CD4-positive, alpha-beta memory T cell (primary cell): ENCODE measurements at regions of chr3 and their contacts with region 1.

Region 1: GRCh38 chr3:46070595-46071093 is 43.4 kb upstream of the XCR1 start:
- DNase-seq: peak in 4 of 5 donors; percentile 47 to 56 (median 49)
- H3K4me3 ChIP-seq: no peak overlapping the region
- H3K4me3 Mint-ChIP-seq: peak overlapping the region in 6 of 8 donors; percentile 19 to 65 (median 51)
- H3K27ac ChIP-seq: peak overlapping the region; percentile 13
- H3K27ac Mint-ChIP-seq: peak overlapping the region; percentile 15 to 91 (median 73)
- H3K4me1 ChIP-seq: peaks cover 62% of the 10 kb centered on the region
- H3K4me1 Mint-ChIP-seq: peaks cover 52 to 68% (median 58%) of the 10 kb centered on the region in 4 donors
- H3K27me3 ChIP-seq: no peaks in the 10 kb centered on the region
- H3K27me3 Mint-ChIP-seq: no peaks in the 10 kb centered on the region

Region 2: GRCh38 chr3:45367453-45367871 is 703.2 kb before region 1 on chr3:
- CTCF ChIA-PET with region 1: no interaction called
- POLR2A ChIA-PET with region 1: no interaction called
- intact Hi-C with region 1: no loop called
- DNase-seq: no peak
- H3K4me3 ChIP-seq: no peak overlapping the region
- H3K4me3 Mint-ChIP-seq: no peak overlapping the region
- H3K27ac ChIP-seq: no peak overlapping the region
- H3K27ac Mint-ChIP-seq: no peak overlapping the region
- H3K4me1 ChIP-seq: no peaks in the 10 kb centered on the region
- H3K4me1 Mint-ChIP-seq: no peaks in the 10 kb centered on the region
- H3K27me3 ChIP-seq: no peaks in the 10 kb centered on the region
- H3K27me3 Mint-ChIP-seq: peaks cover 5 to 12% of the 10 kb centered on the region in 2 donors

Region 3: GRCh38 chr3:45964139-45964538 is 106.5 kb before region 1 on chr3:
- CTCF ChIA-PET with region 1: interaction called, 153 read pairs
- POLR2A ChIA-PET with region 1: interaction called, 58 read pairs
- intact Hi-C with region 1: no loop called
- DNase-seq: peak in 1 of 5 donors; percentile 60
- H3K4me3 ChIP-seq: no peak overlapping the region
- H3K4me3 Mint-ChIP-seq: peak overlapping the region in 6 of 8 donors; percentile 11 to 73 (median 38)
- H3K27ac ChIP-seq: peak overlapping the region; percentile 26
- H3K27ac Mint-ChIP-seq: peak overlapping the region; percentile 41 to 88 (median 75)
- H3K4me1 ChIP-seq: peaks cover 64% of the 10 kb centered on the region
- H3K4me1 Mint-ChIP-seq: peaks cover 35 to 81% (median 61%) of the 10 kb centered on the region in 4 donors
- H3K27me3 ChIP-seq: no peaks in the 10 kb centered on the region
- H3K27me3 Mint-ChIP-seq: no peaks in the 10 kb centered on the region